ENCODE measurements at regions of chr14 and their contacts with region 1.

Region 1: GRCh38 chr14:91244501-91244901 is at the start of gene GPR68:
- DNase-seq: peak in 2 of 5 donors; percentile 29 to 62
- H3K4me3 ChIP-seq: peak within 1 kb of the TSS; percentile 82
- H3K4me3 Mint-ChIP-seq: peak within 1 kb of the TSS; percentile 87 to 95 (median 92)
- H3K27ac ChIP-seq: peak within 1 kb of the TSS; percentile 94
- H3K27ac Mint-ChIP-seq: peak within 1 kb of the TSS; percentile 85 to 100 (median 94)
- H3K4me1 ChIP-seq: peaks cover 80% of the 10 kb centered on the region
- H3K4me1 Mint-ChIP-seq: peaks cover 84 to 97% (median 95%) of the 10 kb centered on the region in 3 donors
- H3K27me3 ChIP-seq: no peaks in the 10 kb centered on the region
- H3K27me3 Mint-ChIP-seq: peaks cover 0 to 5% of the 10 kb centered on the region in 2 donors
- total RNA-seq, gene GPR68: 14.2 to 15.4 TPM

Region 2: DNA sequence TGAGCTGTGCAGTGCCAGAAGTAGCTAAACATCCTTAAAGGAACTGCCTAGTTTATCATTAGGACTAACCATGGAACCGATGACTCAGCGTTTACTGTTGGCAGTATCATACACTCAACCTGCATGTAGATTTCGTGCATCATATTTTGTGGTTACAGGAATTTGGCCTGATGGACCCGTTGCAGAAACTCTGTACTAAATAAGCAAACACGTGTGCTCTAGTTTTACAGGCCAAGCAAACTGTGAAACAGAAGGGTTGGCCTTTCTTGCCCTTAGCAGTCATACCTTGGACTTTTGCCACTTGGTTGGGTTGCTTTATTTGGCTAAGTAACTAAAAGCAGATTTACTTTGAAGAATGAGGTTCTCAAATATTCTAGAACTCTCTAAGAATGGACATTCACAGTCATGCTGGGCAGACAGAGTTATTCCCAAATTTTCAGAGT is 95.0 kb before region 1 on chr14:
- CTCF ChIA-PET with region 1: no interaction called
- POLR2A ChIA-PET with region 1: no interaction called
- DNase-seq: no peak
- H3K4me3 ChIP-seq: no peak overlapping the region
- H3K4me3 Mint-ChIP-seq: no peak overlapping the region
- H3K27ac ChIP-seq: no peak overlapping the region
- H3K27ac Mint-ChIP-seq: no peak overlapping the region
- H3K4me1 ChIP-seq: peaks cover 3% of the 10 kb centered on the region
- H3K4me1 Mint-ChIP-seq: peaks cover 20 to 27% (median 27%) of the 10 kb centered on the region in 3 donors
- H3K27me3 ChIP-seq: no peaks in the 10 kb centered on the region
- H3K27me3 Mint-ChIP-seq: no peaks in the 10 kb centered on the region

Region 3: DNA sequence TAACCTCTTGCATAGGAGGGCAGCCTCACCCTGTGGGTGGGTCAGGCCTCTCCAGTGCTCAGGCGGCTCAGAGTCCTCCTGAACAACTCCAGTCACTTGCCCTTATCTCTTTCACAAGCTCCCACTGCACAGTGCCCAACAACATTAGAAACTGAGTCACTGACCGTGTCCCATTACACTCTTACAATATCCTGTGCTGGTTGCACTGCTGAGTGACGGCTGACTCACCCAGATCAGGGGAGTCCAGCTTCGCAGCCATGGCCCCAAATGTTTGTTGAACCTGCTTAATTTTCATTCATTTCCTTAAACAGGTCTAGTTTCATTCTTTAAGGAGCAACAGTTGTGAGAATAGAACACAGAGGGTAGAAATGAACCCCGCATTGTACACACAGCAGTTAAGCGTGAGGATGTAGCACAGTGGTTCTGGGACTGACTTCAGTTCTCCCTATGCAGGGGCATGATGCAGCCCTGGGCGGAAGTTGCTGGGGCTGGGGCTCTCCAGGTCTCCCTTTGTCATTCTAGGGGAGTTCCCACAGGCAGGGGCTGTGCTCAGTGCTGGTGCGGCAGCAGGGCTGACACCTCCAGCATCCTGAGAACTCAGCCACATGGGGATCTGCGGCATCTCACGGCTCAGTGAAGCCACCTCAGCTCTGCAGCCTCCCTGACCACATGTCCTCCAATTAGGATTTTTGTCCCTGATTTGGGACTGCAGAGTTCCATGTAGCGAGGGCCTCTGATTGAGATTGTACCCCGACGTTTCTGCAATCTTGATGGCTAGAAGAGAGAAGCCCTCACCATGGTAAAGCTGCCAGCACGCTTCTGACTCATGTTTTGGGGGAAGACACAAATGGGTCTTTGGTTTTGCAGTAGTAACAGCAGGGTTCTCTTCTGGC is 16.1 kb before region 1 on chr14:
- CTCF ChIA-PET with region 1: interaction called, 37 read pairs
- POLR2A ChIA-PET with region 1: interaction called, 88 read pairs
- DNase-seq: peak; percentile 62 to 91 (median 78)
- H3K4me3 ChIP-seq: peak overlapping the region; percentile 29
- H3K4me3 Mint-ChIP-seq: peak overlapping the region; percentile 16 to 89 (median 85)
- H3K27ac ChIP-seq: peak overlapping the region; percentile 58
- H3K27ac Mint-ChIP-seq: peak overlapping the region; percentile 87 to 99 (median 98)
- H3K4me1 ChIP-seq: peaks cover 97% of the 10 kb centered on the region
- H3K4me1 Mint-ChIP-seq: peaks cover 86 to 100% (median 94%) of the 10 kb centered on the region in 3 donors
- H3K27me3 ChIP-seq: no peaks in the 10 kb centered on the region
- H3K27me3 Mint-ChIP-seq: peaks cover 0 to 1% of the 10 kb centered on the region in 2 donors

Region 4: DNA sequence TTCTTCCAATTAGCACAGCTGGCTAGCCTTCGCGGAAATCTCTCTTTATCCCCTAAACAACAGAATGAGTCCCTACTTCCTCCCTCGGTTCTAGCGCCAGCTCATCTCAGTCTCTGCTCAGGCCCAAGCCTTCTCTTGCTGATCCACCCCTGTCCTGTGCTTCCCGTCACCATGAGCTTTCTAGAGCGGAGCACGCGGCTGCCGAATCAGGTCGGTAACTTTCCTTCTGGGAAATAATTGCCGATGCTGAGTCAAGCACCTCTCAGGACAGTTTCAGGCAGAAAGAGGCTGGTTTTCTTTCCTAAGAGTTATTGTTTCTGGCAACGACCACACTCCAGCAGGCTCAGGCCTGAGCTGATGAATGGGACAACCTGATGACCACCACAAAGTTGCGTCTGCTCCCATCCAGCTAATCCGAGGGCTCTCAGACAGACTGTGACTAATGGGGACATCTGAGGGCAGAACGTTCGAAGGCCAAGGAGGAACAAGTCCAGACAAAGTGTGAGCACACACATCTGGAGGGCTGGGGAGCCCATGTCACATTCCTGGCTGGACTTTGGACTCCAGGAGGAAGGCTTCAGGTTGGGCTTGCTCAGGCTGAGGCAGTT is 13.6 kb after region 1 on chr14:
- CTCF ChIA-PET with region 1: interaction called, 19 read pairs
- POLR2A ChIA-PET with region 1: interaction called, 29 read pairs
- DNase-seq: no peak
- H3K4me3 ChIP-seq: no peak overlapping the region
- H3K4me3 Mint-ChIP-seq: peak overlapping the region in 1 of 7 donors; percentile 32
- H3K27ac ChIP-seq: no peak overlapping the region
- H3K27ac Mint-ChIP-seq: peak overlapping the region in 4 of 8 donors; percentile 5 to 97 (median 78)
- H3K4me1 ChIP-seq: peaks cover 32% of the 10 kb centered on the region
- H3K4me1 Mint-ChIP-seq: peaks cover 51 to 74% (median 71%) of the 10 kb centered on the region in 3 donors
- H3K27me3 ChIP-seq: no peaks in the 10 kb centered on the region
- H3K27me3 Mint-ChIP-seq: peaks cover 0 to 4% of the 10 kb centered on the region in 2 donors

Region 5: GRCh38 chr14:91470216-91470615 is 225.7 kb after region 1 on chr14:
- CTCF ChIA-PET with region 1: no interaction called
- POLR2A ChIA-PET with region 1: no interaction called
- DNase-seq: no peak
- H3K4me3 ChIP-seq: no peak overlapping the region
- H3K4me3 Mint-ChIP-seq: no peak overlapping the region
- H3K27ac ChIP-seq: no peak overlapping the region
- H3K27ac Mint-ChIP-seq: peak overlapping the region in 7 of 8 donors; percentile 1 to 59 (median 50)
- H3K4me1 ChIP-seq: no peaks in the 10 kb centered on the region
- H3K4me1 Mint-ChIP-seq: peaks cover 22 to 33% (median 27%) of the 10 kb centered on the region in 3 donors
- H3K27me3 ChIP-seq: no peaks in the 10 kb centered on the region
- H3K27me3 Mint-ChIP-seq: no peaks in the 10 kb centered on the region

Measured in CD8-positive, alpha-beta memory T cell (primary cell).